ENCODE measurements at regions of chr1 and their contacts with region 1.

Region 1: GRCh38 chr1:151459331-151460046 is at the start of gene POGZ:
- DNase-seq: peak; percentile 80 to 94 (median 93)
- ATAC-seq: peak; percentile 87
- H3K4me3 ChIP-seq: peak within 1 kb of the TSS; percentile 73
- H3K4me3 Mint-ChIP-seq: peak within 1 kb of the TSS; percentile 87 to 100 (median 91)
- H3K27ac ChIP-seq: peak within 1 kb of the TSS; percentile 81
- H3K27ac Mint-ChIP-seq: peak within 1 kb of the TSS; percentile 91 to 97 (median 96)
- H3K4me1 ChIP-seq: peaks cover 8 to 12% of the 10 kb centered on the region in 2 donors
- H3K4me1 Mint-ChIP-seq: peaks cover 15 to 43% (median 34%) of the 10 kb centered on the region in 7 donors
- H3K27me3 ChIP-seq: no peaks in the 10 kb centered on the region
- H3K27me3 Mint-ChIP-seq: peaks cover 15 to 25% (median 18%) of the 10 kb centered on the region in 5 donors
- total RNA-seq, gene POGZ: 83.7 to 143 (median 112) TPM

Region 2: GRCh38 chr1:151443846-151444782 is 15.4 kb before region 1 on chr1:
- CTCF ChIA-PET with region 1: interaction called, 3 read pairs
- POLR2A ChIA-PET with region 1: interaction called, 4 read pairs
- intact Hi-C with region 1: loop called (anchors 2 kb)
- DNase-seq: peak; percentile 17 to 73 (median 66)
- ATAC-seq: peak; percentile 98
- H3K4me3 ChIP-seq: no peak overlapping the region
- H3K4me3 Mint-ChIP-seq: peak overlapping the region in 1 of 10 donors; percentile 8
- H3K27ac ChIP-seq: no peak overlapping the region
- H3K27ac Mint-ChIP-seq: peak overlapping the region in 3 of 9 donors; percentile 29 to 61 (median 44)
- H3K4me1 ChIP-seq: peaks cover 0 to 4% of the 10 kb centered on the region in 2 donors
- H3K4me1 Mint-ChIP-seq: peaks cover 24 to 76% (median 60%) of the 10 kb centered on the region in 7 donors
- H3K27me3 ChIP-seq: no peaks in the 10 kb centered on the region
- H3K27me3 Mint-ChIP-seq: no peaks in the 10 kb centered on the region

Region 3: DNA sequence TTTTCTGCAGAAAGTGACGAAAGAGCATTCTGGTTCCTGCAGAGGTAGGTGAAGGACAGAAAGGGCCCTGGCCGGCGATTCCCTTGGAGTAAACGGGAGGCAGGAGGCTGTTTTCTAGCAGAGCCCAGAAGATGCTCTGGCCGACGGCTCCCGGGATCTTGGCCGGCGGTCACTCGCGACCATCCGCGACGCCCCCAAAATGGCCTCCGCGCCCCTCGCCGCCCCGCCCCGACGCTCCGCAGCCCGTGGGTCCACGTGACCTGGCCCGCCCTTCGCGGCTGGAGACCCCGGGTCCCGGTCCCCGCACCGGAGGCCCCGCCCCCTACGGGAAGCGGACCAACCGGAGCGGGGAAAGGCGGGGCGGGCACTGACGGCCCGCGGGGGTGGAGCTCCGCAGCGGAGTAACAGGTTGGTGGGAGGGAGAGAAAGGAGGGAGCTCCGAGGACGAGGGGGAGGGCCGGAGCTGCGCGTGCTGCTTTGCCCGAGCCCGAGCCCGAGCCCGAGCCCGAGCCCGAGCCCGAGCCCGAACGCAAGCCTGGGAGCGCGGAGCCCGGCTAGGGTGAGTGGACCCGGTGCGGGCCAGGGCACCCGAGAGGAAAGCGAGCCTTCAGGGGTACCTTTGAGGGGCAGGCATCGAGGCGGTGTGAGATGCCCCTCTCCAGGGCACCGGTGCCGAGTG is 51.6 kb after region 1 on chr1 and contains the start of gene CGN:
- CTCF ChIA-PET with region 1: no interaction called
- POLR2A ChIA-PET with region 1: interaction called, 3 read pairs
- intact Hi-C with region 1: loop called (anchors 1 to 2 kb)
- DNase-seq: peak; percentile 72 to 90 (median 84)
- ATAC-seq: peak; percentile 99
- H3K4me3 ChIP-seq: peak within 1 kb of the TSS; percentile 89
- H3K4me3 Mint-ChIP-seq: peak within 1 kb of the TSS; percentile 90 to 99 (median 94)
- H3K27ac ChIP-seq: peak within 1 kb of the TSS; percentile 65
- H3K27ac Mint-ChIP-seq: peak within 1 kb of the TSS; percentile 38 to 93 (median 86)
- H3K4me1 ChIP-seq: peaks cover 13 to 18% of the 10 kb centered on the region in 2 donors
- H3K4me1 Mint-ChIP-seq: peaks cover 12 to 36% (median 25%) of the 10 kb centered on the region in 7 donors
- H3K27me3 ChIP-seq: no peaks in the 10 kb centered on the region
- H3K27me3 Mint-ChIP-seq: peaks cover 0 to 38% (median 0%) of the 10 kb centered on the region in 5 donors
- total RNA-seq, gene CGN: 0.29 to 2.4 (median 1.3) TPM in 4 of 5 experiments, not detected in the other

Region 4: GRCh38 chr1:151661751-151662150 is 202.3 kb after region 1 on chr1:
- CTCF ChIA-PET with region 1: no interaction called
- POLR2A ChIA-PET with region 1: no interaction called
- intact Hi-C with region 1: no loop called
- DNase-seq: peak in 2 of 9 donors; percentile 4 to 19
- ATAC-seq: peak; percentile 48
- H3K4me3 ChIP-seq: no peak overlapping the region
- H3K4me3 Mint-ChIP-seq: peak overlapping the region in 7 of 10 donors; percentile 6 to 56 (median 34)
- H3K27ac ChIP-seq: peak overlapping the region; percentile 16
- H3K27ac Mint-ChIP-seq: peak overlapping the region; percentile 30 to 91 (median 68)
- H3K4me1 ChIP-seq: no peaks in the 10 kb centered on the region
- H3K4me1 Mint-ChIP-seq: peaks cover 12 to 29% (median 18%) of the 10 kb centered on the region in 7 donors
- H3K27me3 ChIP-seq: no peaks in the 10 kb centered on the region
- H3K27me3 Mint-ChIP-seq: no peaks in the 10 kb centered on the region

Region 5: DNA sequence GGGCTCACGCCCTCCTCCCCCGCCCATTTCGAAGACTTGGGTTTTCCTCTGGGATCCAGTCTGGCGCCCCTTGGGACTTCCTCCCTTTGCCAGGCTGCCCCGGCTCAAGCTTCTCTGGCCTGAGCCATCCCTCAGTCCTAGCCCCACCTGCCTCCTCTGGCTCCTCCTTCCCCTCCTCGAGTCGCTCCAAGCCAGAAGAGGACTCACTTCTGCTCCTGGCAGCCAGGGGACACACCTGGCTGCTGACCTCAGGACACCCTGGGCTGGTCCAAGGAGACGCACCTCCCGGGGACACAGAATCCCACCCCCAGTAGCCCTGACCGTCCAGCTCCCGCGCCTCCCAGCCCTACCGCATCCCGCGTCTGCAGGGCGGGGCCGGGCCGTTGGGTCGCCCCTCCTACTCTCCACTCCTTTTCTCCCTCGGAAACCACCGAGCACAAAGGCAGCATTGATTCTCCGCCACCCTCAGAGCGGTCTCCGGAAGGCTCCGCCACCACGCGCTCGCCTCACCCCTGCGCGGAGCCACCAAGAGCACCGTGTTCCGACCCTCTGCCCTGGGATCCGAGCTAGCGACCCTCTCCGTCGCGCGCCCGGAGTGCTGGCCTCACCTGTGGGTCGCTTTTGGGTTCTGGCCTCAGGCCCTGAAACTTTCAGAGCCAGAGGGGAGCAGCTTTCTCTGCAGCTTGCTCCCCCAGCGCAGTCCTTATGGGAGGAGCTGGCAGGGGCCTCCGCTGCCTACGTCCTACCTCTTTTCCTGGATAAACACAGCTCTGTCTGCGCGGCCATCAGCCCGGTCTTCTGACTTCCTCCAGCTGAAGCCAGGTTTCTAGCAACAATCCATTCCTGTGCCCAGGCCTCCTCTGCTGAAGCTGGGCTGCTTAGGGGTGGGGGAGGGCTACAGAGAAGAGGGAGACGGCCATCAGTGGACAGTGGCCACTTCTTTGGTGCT is 380.2 kb after region 1 on chr1 and contains the start of gene C2CD4D:
- CTCF ChIA-PET with region 1: interaction called, 4 read pairs
- POLR2A ChIA-PET with region 1: no interaction called
- intact Hi-C with region 1: loop called (anchors 5 kb)
- DNase-seq: peak; percentile 42 to 77 (median 66)
- ATAC-seq: peak; percentile 89
- H3K4me3 ChIP-seq: peak within 1 kb of the TSS; percentile 68
- H3K4me3 Mint-ChIP-seq: peak within 1 kb of the TSS; percentile 68 to 89 (median 82)
- H3K27ac ChIP-seq: peak within 1 kb of the TSS; percentile 55
- H3K27ac Mint-ChIP-seq: peak within 1 kb of the TSS; percentile 31 to 87 (median 77)
- H3K4me1 ChIP-seq: peaks cover 27 to 38% of the 10 kb centered on the region in 2 donors
- H3K4me1 Mint-ChIP-seq: peaks cover 33 to 53% (median 40%) of the 10 kb centered on the region in 7 donors
- H3K27me3 ChIP-seq: no peaks in the 10 kb centered on the region
- H3K27me3 Mint-ChIP-seq: peaks cover 0 to 8% (median 0%) of the 10 kb centered on the region in 5 donors
- total RNA-seq, gene C2CD4D: 0.34 to 0.87 TPM in 2 of 5 experiments, not detected in the others

Measured in naive thymus-derived CD4-positive, alpha-beta T cell (primary cell).